Pancreas (tissue), 10 donors: ENCODE measurements at regions of chr17 and their contacts with region 1.

Region 1: GRCh38 chr17:32444308-32445073 is at the start of gene PSMD11:
- DNase-seq: peak; percentile 97 to 99 (median 98)
- ATAC-seq: peak; percentile 97 to 99 (median 98)
- H3K4me3 ChIP-seq: peak within 1 kb of the TSS; percentile 94 to 97 (median 96)
- H3K27ac ChIP-seq: peak within 1 kb of the TSS; percentile 53 to 73 (median 68)
- H3K4me1 ChIP-seq: peaks cover 6 to 19% (median 10%) of the 10 kb centered on the region in 3 donors
- H3K27me3 ChIP-seq: no peaks in the 10 kb centered on the region
- CTCF ChIP-seq: peak; percentile 88 to 91 (median 90)
- total RNA-seq, gene PSMD11: 22.1 to 39.4 (median 32.7) TPM

Region 2: GRCh38 chr17:32361270-32361669 is 83.2 kb before region 1 on chr17:
- intact Hi-C with region 1: loop called in 1 of 3 experiments (anchors 5 kb)
- DNase-seq: no peak
- ATAC-seq: no peak
- H3K4me3 ChIP-seq: no peak overlapping the region
- H3K27ac ChIP-seq: no peak overlapping the region
- H3K4me1 ChIP-seq: peaks cover 0 to 3% (median under 1%) of the 10 kb centered on the region in 3 donors
- H3K27me3 ChIP-seq: no peaks in the 10 kb centered on the region
- CTCF ChIP-seq: no peak